HCT116 (cell line): ENCODE measurements at regions of chr21 and their contacts with region 1.

Region 1: GRCh38 chr21:41283211-41283818 is 33.3 kb upstream of the FAM3B start:
- DNase-seq: peak; percentile 39
- ATAC-seq: peak; percentile 94
- H3K4me3 ChIP-seq: no peak overlapping the region
- H3K27ac ChIP-seq: no peak overlapping the region
- H3K4me1 ChIP-seq: no peaks in the 10 kb centered on the region
- H3K27me3 ChIP-seq: peaks cover 5% of the 10 kb centered on the region; the same call in 1 of the 2 replicates
- CTCF ChIP-seq: peak; percentile 48 to 81 (median 73); a peak in 5 of 6 replicates
- POLR2A ChIP-seq: no peak
- RAD21 ChIP-seq: peak; percentile 76

Region 2: GRCh38 chr21:41361786-41362604 is 78.7 kb after region 1 on chr21 and contains the start of gene MX2:
- CTCF ChIA-PET with region 1: interaction called, 23 read pairs
- POLR2A ChIA-PET with region 1: no interaction called
- RAD21 ChIA-PET with region 1: interaction called, 4 to 8 read pairs
- intact Hi-C with region 1: loop called (anchors 2 kb)
- DNase-seq: no peak
- ATAC-seq: no peak
- H3K4me3 ChIP-seq: no peak within 1 kb of the TSS
- H3K27ac ChIP-seq: no peak within 1 kb of the TSS
- H3K4me1 ChIP-seq: peaks cover 3 to 5% of the 10 kb centered on the region in 2 experiments; a peak in 3 of 4 replicates
- H3K27me3 ChIP-seq: no peaks in the 10 kb centered on the region
- CTCF ChIP-seq: no peak
- POLR2A ChIP-seq: no peak
- RAD21 ChIP-seq: no peak
- total RNA-seq, gene MX2: 0.22 TPM

Region 3: DNA sequence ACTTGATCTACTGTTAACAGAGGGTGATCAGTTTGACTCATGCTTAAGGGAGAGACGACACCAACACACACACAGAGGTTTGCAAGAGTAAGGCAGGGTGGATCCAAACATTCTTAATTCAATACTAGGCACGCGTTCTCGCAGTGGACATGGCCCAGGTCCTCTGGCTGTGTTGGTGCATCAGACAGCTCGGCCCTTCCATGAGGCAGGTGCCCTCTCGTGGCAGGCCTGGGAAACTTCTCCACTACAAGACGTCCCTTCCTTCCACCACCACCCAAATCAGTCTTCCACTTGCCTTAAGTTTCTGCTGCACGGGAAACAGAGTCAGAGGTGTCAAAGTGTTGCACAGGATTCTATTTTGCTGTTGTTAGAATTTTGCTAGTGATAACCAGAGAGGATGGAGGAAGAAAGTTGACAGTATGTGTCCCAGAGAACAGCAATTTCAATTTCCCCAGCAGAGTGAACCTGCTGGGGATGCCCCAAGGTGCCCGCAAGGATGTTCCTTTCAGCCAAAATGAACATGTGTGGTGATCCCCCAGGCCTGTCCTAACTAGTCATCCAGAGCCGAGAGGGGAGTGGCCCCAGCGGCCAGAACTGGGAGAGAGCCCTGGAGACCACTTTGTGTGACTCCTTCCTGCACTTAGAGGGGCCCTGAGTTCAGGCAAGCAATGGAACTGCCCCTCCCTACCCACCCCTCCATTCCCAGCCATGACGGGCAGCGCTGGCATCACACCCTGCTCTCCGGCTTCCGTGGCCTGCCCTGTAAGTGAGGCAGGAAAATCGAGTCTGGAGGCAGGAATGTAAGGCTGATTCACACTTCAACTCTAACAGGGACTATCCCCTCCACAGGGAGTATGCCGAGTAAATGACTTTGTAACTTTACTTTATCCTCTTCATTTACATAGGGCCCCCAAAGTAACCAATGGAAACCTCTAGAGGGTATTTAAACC is 177.5 kb after region 1 on chr21:
- CTCF ChIA-PET with region 1: interaction called, 55 read pairs
- POLR2A ChIA-PET with region 1: interaction called, 3 read pairs
- RAD21 ChIA-PET with region 1: interaction called, 4 to 9 read pairs
- intact Hi-C with region 1: loop called (anchors 1 kb)
- DNase-seq: peak; percentile 27
- ATAC-seq: peak; percentile 97
- H3K4me3 ChIP-seq: no peak overlapping the region
- H3K27ac ChIP-seq: no peak overlapping the region
- H3K4me1 ChIP-seq: no peaks in the 10 kb centered on the region
- H3K27me3 ChIP-seq: no peaks in the 10 kb centered on the region
- CTCF ChIP-seq: peak; percentile 44 to 84 (median 75); a peak in 5 of 6 replicates
- POLR2A ChIP-seq: no peak
- RAD21 ChIP-seq: peak; percentile 59

Region 4: GRCh38 chr21:41466024-41466835 is 182.9 kb after region 1 on chr21:
- CTCF ChIA-PET with region 1: interaction called, 10 read pairs
- POLR2A ChIA-PET with region 1: no interaction called
- RAD21 ChIA-PET with region 1: interaction called in 1 of 2 experiments, 6 read pairs
- intact Hi-C with region 1: no loop called
- DNase-seq: no peak
- ATAC-seq: no peak
- H3K4me3 ChIP-seq: no peak overlapping the region
- H3K27ac ChIP-seq: no peak overlapping the region
- H3K4me1 ChIP-seq: peaks cover 0 to 9% of the 10 kb centered on the region in 2 experiments; a peak in 2 of 4 replicates
- H3K27me3 ChIP-seq: no peaks in the 10 kb centered on the region; the same call in 1 of the 2 replicates
- CTCF ChIP-seq: no peak
- POLR2A ChIP-seq: no peak
- RAD21 ChIP-seq: no peak

Region 5: DNA sequence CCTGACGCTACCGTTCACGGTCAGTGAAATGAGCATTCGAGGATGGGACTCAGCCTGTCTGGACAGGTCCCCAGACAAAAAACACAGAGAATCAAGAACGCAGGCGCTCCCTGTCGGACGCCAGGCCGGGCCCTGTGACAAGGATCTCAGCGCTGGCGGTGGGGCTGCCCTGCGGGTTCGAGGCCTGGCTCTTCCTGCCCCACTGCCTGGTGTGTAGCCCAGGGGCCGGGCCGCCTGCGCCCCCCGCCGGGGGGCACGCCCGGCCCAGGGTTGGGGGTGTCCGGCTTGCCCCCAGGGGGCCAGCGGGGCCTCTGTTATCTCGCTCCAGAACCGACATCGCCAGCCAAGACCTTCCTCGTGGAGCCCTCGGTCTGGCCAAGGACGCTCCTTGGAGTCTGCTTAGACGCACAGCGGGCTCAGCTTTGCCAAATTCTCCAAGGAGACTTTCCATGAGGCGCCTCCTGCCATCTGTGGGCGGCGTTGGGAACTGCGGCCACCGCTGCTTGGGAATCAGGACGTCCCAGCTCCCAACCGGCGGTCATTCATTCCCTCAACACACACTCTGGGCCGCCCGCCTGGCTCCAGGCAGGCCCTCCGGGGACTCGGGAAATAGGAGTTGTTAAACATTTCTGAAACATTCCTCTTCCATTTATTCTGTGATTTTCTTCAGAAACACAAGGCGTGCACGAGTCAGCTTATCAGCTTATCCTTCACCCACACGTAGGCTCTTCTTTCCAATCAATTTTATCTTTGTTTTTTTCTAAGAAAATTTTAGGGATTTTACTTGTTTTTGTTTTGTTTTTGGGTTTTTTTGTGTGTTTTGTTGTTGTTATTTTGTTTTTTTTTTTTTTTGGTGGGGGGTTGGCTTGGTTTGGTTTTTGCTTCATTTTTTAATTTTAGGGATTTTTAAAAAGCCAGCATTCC is 494.9 kb after region 1 on chr21:
- CTCF ChIA-PET with region 1: interaction called, 13 read pairs
- POLR2A ChIA-PET with region 1: no interaction called
- RAD21 ChIA-PET with region 1: no interaction called
- intact Hi-C with region 1: loop called (anchors 5 kb)
- DNase-seq: peak; percentile 84
- ATAC-seq: peak; percentile 92
- H3K4me3 ChIP-seq: peak overlapping the region in 1 of 2 experiments; percentile 18; a peak in 1 of 4 replicates
- H3K27ac ChIP-seq: no peak overlapping the region; the same call in 1 of the 2 replicates
- H3K4me1 ChIP-seq: peaks cover 10 to 25% of the 10 kb centered on the region in 2 experiments
- H3K27me3 ChIP-seq: peaks cover 53% of the 10 kb centered on the region
- CTCF ChIP-seq: peak; percentile 76 to 91 (median 86)
- POLR2A ChIP-seq: no peak
- RAD21 ChIP-seq: peak; percentile 84

Region 6: DNA sequence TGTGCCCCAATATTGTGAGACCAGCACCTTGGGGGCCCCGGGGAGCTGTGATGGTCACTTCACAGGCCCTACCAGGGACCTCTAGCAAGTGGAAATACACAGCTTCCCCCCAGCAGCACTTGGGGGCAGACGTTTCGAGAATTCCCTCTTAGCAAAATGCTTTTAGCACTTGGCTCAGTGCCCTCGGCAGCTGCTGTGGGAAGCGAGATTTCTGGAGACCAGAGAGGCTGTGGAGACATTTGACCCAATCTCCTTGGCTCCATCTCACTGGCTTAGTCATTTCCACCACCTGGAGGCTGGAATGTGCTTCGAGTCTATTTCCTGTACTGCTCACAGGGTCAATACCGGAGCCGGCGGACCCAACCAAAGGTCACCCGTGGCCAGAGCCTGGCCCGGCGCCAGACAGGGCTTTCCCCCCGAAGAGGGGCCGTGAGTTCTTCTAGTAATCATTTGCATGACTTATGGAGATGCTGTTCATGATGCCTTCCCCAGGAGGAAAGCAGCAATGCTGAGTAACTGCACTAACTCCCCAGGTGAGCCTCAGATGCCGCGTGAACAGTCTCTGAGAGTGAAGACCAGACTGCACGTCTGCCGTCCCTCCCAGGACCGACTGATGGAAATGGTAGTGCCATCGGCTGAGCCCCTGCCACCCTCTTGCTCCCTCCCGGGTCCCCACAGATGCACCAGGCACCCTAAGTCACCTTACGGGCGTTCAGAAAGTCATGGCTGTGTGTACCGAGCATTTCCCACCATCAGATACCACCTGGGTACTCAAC is 674.9 kb after region 1 on chr21:
- CTCF ChIA-PET with region 1: no interaction called
- POLR2A ChIA-PET with region 1: no interaction called
- RAD21 ChIA-PET with region 1: no interaction called
- intact Hi-C with region 1: no loop called
- DNase-seq: peak; percentile 61
- ATAC-seq: peak; percentile 70
- H3K4me3 ChIP-seq: peak overlapping the region in 1 of 2 experiments; percentile 16; a peak in 1 of 4 replicates
- H3K27ac ChIP-seq: peak overlapping the region; percentile 36
- H3K4me1 ChIP-seq: peaks cover 24 to 46% of the 10 kb centered on the region in 2 experiments
- H3K27me3 ChIP-seq: no peaks in the 10 kb centered on the region
- CTCF ChIP-seq: peak in 2 of 3 experiments; percentile 58; a peak in 4 of 6 replicates
- POLR2A ChIP-seq: no peak
- RAD21 ChIP-seq: no peak

Region 7: DNA sequence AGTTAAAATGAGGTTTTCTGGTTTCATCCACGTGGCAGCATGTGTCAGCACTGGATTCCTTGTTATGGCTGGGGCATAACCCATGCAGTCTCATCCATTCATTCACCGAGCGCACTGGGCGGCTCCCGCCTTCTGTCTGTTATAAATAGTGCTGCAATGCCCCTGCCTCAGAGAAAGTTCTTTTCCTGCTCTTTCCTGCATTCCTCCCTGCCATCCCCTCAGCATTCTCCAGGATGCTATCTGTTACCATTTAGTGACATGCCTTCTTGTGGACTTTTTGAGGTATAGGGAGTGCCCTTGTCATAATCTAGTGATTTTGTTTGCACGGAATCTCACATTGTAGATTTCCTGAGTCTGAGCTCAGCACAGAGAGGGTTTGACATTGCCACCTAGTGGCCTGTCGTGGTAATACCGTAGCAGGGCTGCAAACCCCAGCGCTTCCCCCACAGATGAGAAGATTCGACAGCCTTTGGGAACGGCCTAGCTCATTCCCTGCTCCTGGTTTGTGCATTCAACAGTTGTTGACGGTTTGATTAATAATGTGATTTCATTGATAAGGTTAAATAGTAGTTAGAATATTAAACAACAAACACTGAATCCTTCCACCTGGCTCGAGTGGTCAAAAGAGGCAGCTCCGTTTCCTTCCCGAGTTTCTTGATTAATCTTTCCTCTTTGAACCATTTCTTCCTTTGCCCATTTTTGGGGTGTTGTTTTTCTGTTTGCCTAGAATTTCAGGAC is 834.1 kb after region 1 on chr21:
- CTCF ChIA-PET with region 1: interaction called, 16 read pairs
- POLR2A ChIA-PET with region 1: no interaction called
- RAD21 ChIA-PET with region 1: no interaction called
- intact Hi-C with region 1: no loop called
- DNase-seq: peak; percentile 54
- ATAC-seq: peak; percentile 95
- H3K4me3 ChIP-seq: peak overlapping the region; percentile 26 to 28
- H3K27ac ChIP-seq: no peak overlapping the region
- H3K4me1 ChIP-seq: peaks cover 0 to 5% of the 10 kb centered on the region in 2 experiments; a peak in 1 of 4 replicates
- H3K27me3 ChIP-seq: peaks cover 21% of the 10 kb centered on the region; the same call in 1 of the 2 replicates
- CTCF ChIP-seq: peak; percentile 72 to 91 (median 91); a peak in 5 of 6 replicates
- POLR2A ChIP-seq: no peak
- RAD21 ChIP-seq: peak; percentile 87